Activated CD4-positive, alpha-beta T cell treated with anti-CD3 and anti-CD28 coated beads, Interleukin-2, amount 10 ng/mL, durations not matched to agents 24 days and 14 days (primary cell): ENCODE measurements at regions of chr16 and their contacts with region 1.

Region 1: DNA sequence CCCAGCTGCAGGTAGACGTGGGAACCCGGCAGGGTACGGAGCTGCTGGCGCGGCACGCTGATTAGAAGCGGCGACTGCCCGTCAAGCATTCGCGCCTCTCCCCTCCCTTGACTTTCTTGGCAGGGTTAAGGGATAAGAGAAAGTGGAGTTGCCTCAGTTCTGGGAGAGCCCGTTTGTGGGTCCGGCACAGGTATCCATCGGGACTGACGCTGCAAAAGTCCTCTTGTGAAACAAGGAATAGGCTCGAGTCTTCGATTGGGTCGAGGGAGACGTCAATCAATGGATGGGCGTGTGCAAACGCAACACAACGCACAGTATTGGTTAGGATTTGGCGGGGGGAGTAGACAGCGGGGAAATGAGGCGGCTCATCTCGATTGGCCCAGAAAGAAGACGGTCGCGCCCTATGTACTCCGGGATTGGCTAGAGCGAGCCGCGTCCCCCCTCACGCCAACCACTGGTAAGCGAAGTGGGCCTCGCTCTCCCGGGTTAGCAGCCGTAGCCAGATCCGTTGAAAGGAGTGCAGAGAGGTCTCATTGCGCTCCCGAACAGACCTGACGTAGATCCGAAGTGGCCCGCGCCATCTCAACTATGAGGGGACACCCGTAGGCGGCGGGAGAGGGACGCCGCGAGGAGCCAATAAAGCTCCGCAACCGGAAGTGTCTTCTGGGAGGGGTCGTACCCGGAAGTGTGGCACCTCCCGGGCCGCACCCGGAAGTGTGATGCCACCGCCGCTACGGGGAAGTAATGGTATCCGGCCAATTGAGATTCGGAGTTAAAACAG is at the start of gene MON1B:
- DNase-seq: peak; percentile 98
- H3K4me3 Mint-ChIP-seq: peak within 1 kb of the TSS; percentile 97
- H3K27ac Mint-ChIP-seq: peak within 1 kb of the TSS; percentile 99
- H3K4me1 Mint-ChIP-seq: peaks cover 36% of the 10 kb centered on the region
- H3K27me3 Mint-ChIP-seq: peaks cover 10% of the 10 kb centered on the region
- total RNA-seq, gene MON1B: 65.7 and 69.3 TPM in 2 replicates

Region 2: GRCh38 chr16:75519881-75520280 is 1670.8 kb before region 1 on chr16:
- intact Hi-C with region 1: loop called (anchors 1 kb)
- DNase-seq: no peak
- H3K4me3 Mint-ChIP-seq: no peak overlapping the region
- H3K27ac Mint-ChIP-seq: no peak overlapping the region
- H3K4me1 Mint-ChIP-seq: peaks cover 10% of the 10 kb centered on the region
- H3K27me3 Mint-ChIP-seq: peaks cover 7% of the 10 kb centered on the region

Region 3: GRCh38 chr16:77211880-77212740 is 21.4 kb after region 1 on chr16:
- intact Hi-C with region 1: loop called (anchors 1 kb)
- DNase-seq: peak; percentile 92
- H3K4me3 Mint-ChIP-seq: peak overlapping the region; percentile 87
- H3K27ac Mint-ChIP-seq: peak overlapping the region; percentile 85
- H3K4me1 Mint-ChIP-seq: peaks cover 14% of the 10 kb centered on the region
- H3K27me3 Mint-ChIP-seq: no peaks in the 10 kb centered on the region

Region 4: GRCh38 chr16:78099372-78100161 is 908.9 kb after region 1 on chr16 and contains the start of gene WWOX:
- intact Hi-C with region 1: loop called (anchors 2 kb)
- DNase-seq: peak; percentile 99
- H3K4me3 Mint-ChIP-seq: peak within 1 kb of the TSS; percentile 93
- H3K27ac Mint-ChIP-seq: peak within 1 kb of the TSS; percentile 95
- H3K4me1 Mint-ChIP-seq: peaks cover 15% of the 10 kb centered on the region
- H3K27me3 Mint-ChIP-seq: peaks cover 1% of the 10 kb centered on the region
- total RNA-seq, gene WWOX: 15.0 and 16.1 TPM in 2 replicates

Region 5: DNA sequence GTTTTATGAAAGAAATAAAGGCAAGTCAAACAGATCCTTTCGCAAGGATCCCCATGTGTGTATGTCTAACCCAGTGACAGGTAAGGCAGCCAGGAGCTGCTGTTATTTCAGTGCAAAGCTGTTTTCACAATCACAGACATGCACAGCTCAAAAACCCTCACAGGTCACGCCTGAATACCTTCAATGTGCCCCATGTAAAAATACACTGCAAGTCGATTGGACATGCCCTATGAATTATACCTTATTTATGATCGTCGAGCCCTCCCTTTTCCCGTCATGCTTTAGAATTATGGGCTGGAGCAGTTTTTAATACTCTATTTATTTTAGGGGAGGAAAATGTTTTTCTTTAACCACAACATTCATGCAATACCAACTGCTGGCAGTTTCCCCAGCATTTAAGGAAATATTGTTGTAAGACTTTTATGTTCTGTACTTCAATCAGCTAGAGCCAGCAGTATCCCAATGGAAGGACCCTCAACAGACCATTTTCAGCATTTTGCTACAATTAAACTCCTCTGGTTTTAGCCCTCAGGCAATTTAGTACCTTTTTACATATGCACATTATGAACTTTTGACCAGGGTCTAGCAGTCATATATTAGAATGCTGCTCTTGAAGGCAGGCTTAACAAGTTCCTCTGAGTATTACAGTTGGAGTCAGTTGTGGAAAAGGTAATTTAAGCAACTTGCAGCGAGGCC is 1271.0 kb after region 1 on chr16:
- intact Hi-C with region 1: no loop called
- DNase-seq: no peak
- H3K4me3 Mint-ChIP-seq: no peak overlapping the region
- H3K27ac Mint-ChIP-seq: no peak overlapping the region
- H3K4me1 Mint-ChIP-seq: no peaks in the 10 kb centered on the region
- H3K27me3 Mint-ChIP-seq: no peaks in the 10 kb centered on the region